CD4-positive, alpha-beta memory T cell (primary cell): ENCODE measurements at regions of chr1 and their contacts with region 1.

Region 1: GRCh38 chr1:235367000-235367908 is at the start of gene TBCE:
- DNase-seq: peak; percentile 74 to 82 (median 76)
- H3K4me3 ChIP-seq: peak within 1 kb of the TSS; percentile 59 to 67
- H3K4me3 Mint-ChIP-seq: peak within 1 kb of the TSS; percentile 97 to 100 (median 98)
- H3K27ac ChIP-seq: peak within 1 kb of the TSS; percentile 71
- H3K27ac Mint-ChIP-seq: peak within 1 kb of the TSS; percentile 84 to 98 (median 95)
- H3K4me1 ChIP-seq: peaks cover 20% of the 10 kb centered on the region
- H3K4me1 Mint-ChIP-seq: peaks cover 17 to 43% (median 31%) of the 10 kb centered on the region in 4 donors
- H3K27me3 ChIP-seq: no peaks in the 10 kb centered on the region
- H3K27me3 Mint-ChIP-seq: no peaks in the 10 kb centered on the region
- total RNA-seq, gene TBCE: 17.0 to 17.5 TPM

Region 2: DNA sequence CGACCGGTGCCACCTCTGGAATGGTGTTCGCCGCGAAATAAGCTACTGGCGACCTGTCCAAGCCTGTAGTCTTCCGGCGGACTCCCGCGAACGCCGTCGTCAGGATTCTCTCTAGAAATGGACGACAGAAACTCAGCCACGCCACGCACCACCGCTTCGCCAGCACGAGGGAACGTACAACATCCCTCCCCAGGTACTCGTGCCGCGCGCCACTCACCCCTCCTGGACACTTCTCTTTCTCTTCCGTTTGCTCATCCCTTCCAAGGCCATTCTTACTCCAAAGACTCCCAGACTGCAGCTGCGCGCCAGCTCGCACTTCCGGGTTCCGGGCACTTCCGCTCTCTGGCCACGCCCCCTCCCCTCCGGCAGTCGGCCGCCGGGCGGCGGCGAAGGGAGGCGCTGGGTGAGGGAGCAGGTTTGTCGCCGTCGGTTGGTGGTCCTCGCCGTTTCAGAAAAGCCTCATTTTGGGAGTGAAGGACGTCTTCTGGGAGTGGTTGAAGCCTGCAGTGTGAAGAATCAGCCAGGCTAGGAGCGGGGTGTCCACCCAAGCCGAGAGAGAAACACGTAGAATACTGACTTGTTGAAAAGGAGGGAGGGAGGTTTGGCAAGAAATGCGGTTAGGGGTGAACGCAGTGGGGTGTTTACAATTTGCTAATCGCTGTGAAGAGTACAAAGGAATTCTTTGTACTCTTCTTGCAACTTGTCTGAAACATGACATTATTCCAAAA is 206.1 kb before region 1 on chr1 and contains the start of gene RBM34:
- CTCF ChIA-PET with region 1: no interaction called
- POLR2A ChIA-PET with region 1: interaction called, 3 read pairs
- intact Hi-C with region 1: loop called (anchors 2 kb)
- DNase-seq: peak; percentile 90 to 93 (median 91)
- H3K4me3 ChIP-seq: peak within 1 kb of the TSS; percentile 79 to 80
- H3K4me3 Mint-ChIP-seq: peak within 1 kb of the TSS; percentile 94 to 99 (median 98)
- H3K27ac ChIP-seq: peak within 1 kb of the TSS; percentile 92
- H3K27ac Mint-ChIP-seq: peak within 1 kb of the TSS; percentile 95 to 99 (median 98)
- H3K4me1 ChIP-seq: peaks cover 50% of the 10 kb centered on the region
- H3K4me1 Mint-ChIP-seq: peaks cover 15 to 30% (median 22%) of the 10 kb centered on the region in 4 donors
- H3K27me3 ChIP-seq: no peaks in the 10 kb centered on the region
- H3K27me3 Mint-ChIP-seq: no peaks in the 10 kb centered on the region
- total RNA-seq, gene RBM34: 120 TPM

Region 3: DNA sequence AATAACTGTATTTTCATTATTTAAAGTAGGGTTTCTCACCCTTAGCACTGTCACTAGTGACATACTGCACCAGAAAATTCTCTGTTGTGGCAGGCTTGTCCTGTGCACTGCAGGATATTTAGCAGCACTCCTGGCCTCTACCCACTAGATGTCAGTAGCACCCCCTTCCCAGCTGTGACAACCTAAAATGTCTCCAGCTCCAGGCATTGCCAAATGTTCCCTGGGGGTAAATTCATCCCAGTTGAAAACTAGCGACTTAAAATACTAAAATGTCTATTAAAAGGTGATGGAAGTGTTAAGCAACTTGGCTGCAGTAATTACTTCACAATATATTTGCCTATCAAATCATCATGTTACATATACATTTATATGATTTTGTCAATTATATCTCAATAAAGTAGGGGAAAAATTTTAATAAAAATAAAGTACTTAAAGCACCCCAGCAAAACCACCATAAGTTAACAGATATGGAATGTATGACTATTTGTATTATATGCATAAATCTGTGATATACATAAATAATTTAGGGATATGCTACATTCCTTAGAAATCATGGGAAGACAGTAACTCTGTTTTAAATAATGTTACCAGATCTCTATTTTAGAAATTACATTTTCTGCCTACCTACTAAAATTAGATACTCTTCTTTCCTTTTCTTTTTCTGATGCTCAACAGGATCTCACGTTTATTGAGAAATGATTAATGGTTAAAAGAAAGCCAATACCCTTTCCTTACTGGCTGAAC is 113.9 kb before region 1 on chr1:
- CTCF ChIA-PET with region 1: no interaction called
- POLR2A ChIA-PET with region 1: interaction called, 3 read pairs
- intact Hi-C with region 1: loop called (anchors 1 kb)
- DNase-seq: peak; percentile 58 to 71 (median 66)
- H3K4me3 ChIP-seq: no peak overlapping the region
- H3K4me3 Mint-ChIP-seq: no peak overlapping the region
- H3K27ac ChIP-seq: no peak overlapping the region
- H3K27ac Mint-ChIP-seq: peak overlapping the region; percentile 35 to 86 (median 70)
- H3K4me1 ChIP-seq: peaks cover 36% of the 10 kb centered on the region
- H3K4me1 Mint-ChIP-seq: peaks cover 24 to 46% (median 30%) of the 10 kb centered on the region in 4 donors
- H3K27me3 ChIP-seq: no peaks in the 10 kb centered on the region
- H3K27me3 Mint-ChIP-seq: no peaks in the 10 kb centered on the region

Region 4: DNA sequence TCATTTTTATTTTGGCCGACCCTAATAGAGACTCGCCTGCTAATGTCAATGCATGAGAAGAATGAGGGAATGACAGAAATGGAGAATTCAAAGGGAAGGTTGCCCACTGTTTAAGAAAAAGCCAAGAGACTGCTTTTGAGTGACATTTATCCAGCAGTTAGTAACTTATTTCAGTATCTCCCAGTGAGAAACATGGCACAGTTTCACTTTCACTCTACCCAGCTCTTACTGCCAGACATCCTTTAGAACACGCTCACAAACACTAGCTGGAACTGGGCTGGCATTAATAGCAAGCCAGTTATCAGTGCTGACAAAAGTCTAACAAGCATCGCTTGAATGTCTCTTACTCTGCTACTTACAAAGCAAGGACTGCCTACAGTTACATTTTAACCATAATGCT is 30.4 kb before region 1 on chr1:
- CTCF ChIA-PET with region 1: no interaction called
- POLR2A ChIA-PET with region 1: interaction called, 3 read pairs
- intact Hi-C with region 1: loop called (anchors 2 kb)
- DNase-seq: peak; percentile 36 to 56 (median 50)
- H3K4me3 ChIP-seq: peak overlapping the region in 1 of 2 donors; percentile 20
- H3K4me3 Mint-ChIP-seq: peak overlapping the region; percentile 70 to 87 (median 79)
- H3K27ac ChIP-seq: peak overlapping the region; percentile 49
- H3K27ac Mint-ChIP-seq: peak overlapping the region; percentile 62 to 95 (median 89)
- H3K4me1 ChIP-seq: peaks cover 40% of the 10 kb centered on the region
- H3K4me1 Mint-ChIP-seq: peaks cover 20 to 31% (median 21%) of the 10 kb centered on the region in 4 donors
- H3K27me3 ChIP-seq: no peaks in the 10 kb centered on the region
- H3K27me3 Mint-ChIP-seq: no peaks in the 10 kb centered on the region